Tibial artery (tissue), 4 donors: ENCODE measurements at regions of chr3 and their contacts with region 1.

Region 1: DNA sequence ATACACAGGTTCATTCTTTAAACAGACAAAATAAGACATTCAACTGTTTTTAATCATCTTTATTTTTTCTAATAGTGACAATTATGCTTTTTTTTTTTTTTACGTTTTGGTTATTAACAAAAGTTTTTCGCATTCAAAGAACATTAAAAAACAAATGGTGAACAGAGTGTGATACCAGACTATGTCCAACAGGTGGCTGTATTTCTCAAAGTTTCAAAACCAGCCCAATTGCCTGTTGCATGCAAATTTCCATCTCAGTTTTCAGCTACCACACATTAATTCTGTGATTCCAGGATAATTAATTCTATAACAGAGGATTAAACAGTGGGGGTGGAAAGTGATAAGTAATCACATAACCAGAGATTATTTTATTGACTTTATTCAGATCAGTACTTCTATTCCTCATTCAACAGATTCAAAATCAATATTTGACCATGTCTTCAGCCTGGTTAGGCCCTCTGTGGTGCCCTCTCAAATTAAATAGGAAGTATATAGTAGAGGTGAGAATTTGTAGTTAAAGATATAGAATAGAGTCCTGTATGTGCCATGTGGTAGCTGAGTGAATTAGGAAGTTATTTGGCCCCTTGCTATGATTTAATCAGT is 122.2 kb upstream of the DCBLD2 start:
- DNase-seq: no peak
- H3K4me3 ChIP-seq: no peak overlapping the region
- H3K27ac ChIP-seq: no peak overlapping the region
- H3K4me1 ChIP-seq: no peaks in the 10 kb centered on the region
- H3K27me3 ChIP-seq: no peaks in the 10 kb centered on the region
- CTCF ChIP-seq: peak; percentile 66 to 79

Region 2: GRCh38 chr3:99172736-99173657 is 149.3 kb after region 1 on chr3:
- intact Hi-C with region 1: loop called (anchors 5 kb)
- DNase-seq: peak in 1 of 2 donors; percentile 51
- H3K4me3 ChIP-seq: no peak overlapping the region
- H3K27ac ChIP-seq: no peak overlapping the region
- H3K4me1 ChIP-seq: peaks cover 0 to 8% (median 0%) of the 10 kb centered on the region in 4 donors
- H3K27me3 ChIP-seq: no peaks in the 10 kb centered on the region
- CTCF ChIP-seq: peak; percentile 55

Region 3: DNA sequence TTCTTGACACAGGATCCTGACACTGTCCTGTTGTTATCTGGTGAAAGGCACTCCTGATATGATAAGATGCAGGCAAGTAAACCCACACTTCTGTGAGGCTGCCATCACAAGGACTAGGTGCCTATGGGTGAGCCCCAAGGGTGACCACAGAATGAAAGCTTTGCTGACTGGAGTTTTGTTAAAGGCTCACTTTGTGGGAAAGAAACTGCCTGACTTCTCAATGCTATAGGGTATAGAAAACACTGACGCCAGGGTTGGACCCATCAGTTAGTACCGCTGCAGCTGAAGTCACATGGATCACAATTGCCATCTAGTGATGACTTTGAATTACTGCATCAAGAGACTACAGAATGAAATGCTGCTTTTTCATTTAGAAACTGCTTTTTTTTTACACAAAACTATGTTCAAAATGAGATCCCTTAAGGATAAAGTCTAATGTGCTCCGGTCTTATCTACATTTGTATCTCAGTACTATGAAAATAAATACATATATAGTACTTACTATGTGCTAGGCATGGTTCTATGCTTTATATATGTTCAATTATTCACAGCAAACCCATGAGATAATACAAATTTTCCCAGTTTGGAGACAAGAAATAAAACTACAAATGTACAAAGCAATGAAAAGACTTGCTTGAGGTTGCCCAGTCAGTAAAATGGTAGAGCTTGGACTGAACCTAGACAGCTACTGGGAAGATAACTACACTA is 729.7 kb after region 1 on chr3:
- intact Hi-C with region 1: loop called (anchors 10 kb)
- DNase-seq: no peak
- H3K4me3 ChIP-seq: no peak overlapping the region
- H3K27ac ChIP-seq: peak overlapping the region in 1 of 2 donors; percentile 72
- H3K4me1 ChIP-seq: peaks cover 0 to 86% (median 43%) of the 10 kb centered on the region in 4 donors
- H3K27me3 ChIP-seq: no peaks in the 10 kb centered on the region
- CTCF ChIP-seq: peak; percentile 73 to 77